ENCODE measurements at regions of chr5 and their contacts with region 1.

Region 1: GRCh38 chr5:179495906-179496455 is 54.4 kb upstream of the RUFY1 start:
- DNase-seq: no peak
- ATAC-seq: no peak
- H3K4me3 Mint-ChIP-seq: no peak overlapping the region
- H3K27ac Mint-ChIP-seq: no peak overlapping the region
- H3K4me1 Mint-ChIP-seq: no peaks in the 10 kb centered on the region
- H3K27me3 Mint-ChIP-seq: peaks cover 4% of the 10 kb centered on the region

Region 2: GRCh38 chr5:178279725-178280438 is 1216.1 kb before region 1 on chr5:
- CTCF ChIA-PET with region 1: interaction called, 4 read pairs
- POLR2A ChIA-PET with region 1: no interaction called
- intact Hi-C with region 1: loop called in 1 of 2 experiments (anchors 5 kb)
- DNase-seq: peak; percentile 82
- ATAC-seq: peak; percentile 53
- H3K4me3 Mint-ChIP-seq: no peak overlapping the region
- H3K27ac Mint-ChIP-seq: no peak overlapping the region
- H3K4me1 Mint-ChIP-seq: peaks cover 3% of the 10 kb centered on the region
- H3K27me3 Mint-ChIP-seq: peaks cover 8% of the 10 kb centered on the region

Region 3: GRCh38 chr5:178793151-178793550 is 702.8 kb before region 1 on chr5:
- CTCF ChIA-PET with region 1: no interaction called
- POLR2A ChIA-PET with region 1: no interaction called
- intact Hi-C with region 1: loop called in 1 of 2 experiments (anchors 1 kb)
- DNase-seq: peak; percentile 62
- ATAC-seq: no peak
- H3K4me3 Mint-ChIP-seq: no peak overlapping the region
- H3K27ac Mint-ChIP-seq: no peak overlapping the region
- H3K4me1 Mint-ChIP-seq: no peaks in the 10 kb centered on the region
- H3K27me3 Mint-ChIP-seq: peaks cover 4% of the 10 kb centered on the region

Region 4: GRCh38 chr5:178958774-178959173 is 537.2 kb before region 1 on chr5:
- CTCF ChIA-PET with region 1: no interaction called
- POLR2A ChIA-PET with region 1: no interaction called
- intact Hi-C with region 1: loop called in 1 of 2 experiments (anchors 5 kb)
- DNase-seq: no peak
- ATAC-seq: no peak
- H3K4me3 Mint-ChIP-seq: no peak overlapping the region
- H3K27ac Mint-ChIP-seq: no peak overlapping the region
- H3K4me1 Mint-ChIP-seq: no peaks in the 10 kb centered on the region
- H3K27me3 Mint-ChIP-seq: peaks cover 3% of the 10 kb centered on the region

Region 5: GRCh38 chr5:179166886-179167841 is 328.8 kb before region 1 on chr5:
- CTCF ChIA-PET with region 1: interaction called, 17 read pairs
- POLR2A ChIA-PET with region 1: no interaction called
- intact Hi-C with region 1: loop called (anchors 1 kb)
- DNase-seq: peak; percentile 85
- ATAC-seq: peak; percentile 95
- H3K4me3 Mint-ChIP-seq: no peak overlapping the region
- H3K27ac Mint-ChIP-seq: no peak overlapping the region
- H3K4me1 Mint-ChIP-seq: no peaks in the 10 kb centered on the region
- H3K27me3 Mint-ChIP-seq: peaks cover 4% of the 10 kb centered on the region

Region 6: DNA sequence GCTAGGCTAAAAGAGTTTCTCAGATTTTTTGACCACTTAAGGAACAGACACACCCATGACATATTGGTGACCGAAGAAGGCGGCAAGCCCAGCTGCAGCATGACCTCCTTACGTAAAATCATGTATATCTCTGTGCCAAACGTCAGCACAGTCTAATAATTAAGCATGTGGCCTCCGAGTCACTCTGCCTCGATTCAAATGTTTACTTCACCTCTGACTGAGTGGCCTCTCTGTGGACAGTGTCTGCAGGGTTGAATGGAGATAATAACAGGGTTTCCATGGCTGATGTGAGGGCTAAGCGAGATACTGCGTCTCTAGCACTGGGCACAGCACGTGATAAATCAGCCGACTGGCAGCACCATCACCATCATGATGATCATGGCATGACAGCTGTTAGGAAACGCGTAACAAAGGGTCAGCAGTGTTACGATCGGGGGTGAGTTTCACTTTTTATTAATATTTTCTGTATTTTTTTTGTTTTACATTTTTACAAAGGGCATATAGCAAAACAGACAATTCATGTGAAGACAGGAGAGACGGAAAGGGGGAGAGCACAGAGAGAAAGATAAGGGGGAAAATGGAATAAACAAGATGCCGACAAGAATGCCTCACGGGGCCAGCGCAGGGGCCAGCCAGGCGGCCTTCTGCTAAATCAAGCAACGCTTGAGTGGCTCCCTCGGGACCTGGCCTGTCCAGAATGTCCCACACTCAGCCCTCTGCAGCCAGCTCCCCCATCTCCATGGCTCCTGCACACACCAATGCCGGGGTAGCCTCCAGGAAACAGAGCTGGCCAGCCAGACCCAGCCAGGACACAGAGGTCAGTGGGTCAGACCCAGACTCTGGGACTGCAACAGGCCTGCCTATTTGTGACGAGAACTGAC is 211.0 kb before region 1 on chr5:
- CTCF ChIA-PET with region 1: no interaction called
- POLR2A ChIA-PET with region 1: no interaction called
- intact Hi-C with region 1: loop called in 1 of 2 experiments (anchors 10 kb)
- DNase-seq: no peak
- ATAC-seq: no peak
- H3K4me3 Mint-ChIP-seq: no peak overlapping the region
- H3K27ac Mint-ChIP-seq: no peak overlapping the region
- H3K4me1 Mint-ChIP-seq: no peaks in the 10 kb centered on the region
- H3K27me3 Mint-ChIP-seq: no peaks in the 10 kb centered on the region

Region 7: DNA sequence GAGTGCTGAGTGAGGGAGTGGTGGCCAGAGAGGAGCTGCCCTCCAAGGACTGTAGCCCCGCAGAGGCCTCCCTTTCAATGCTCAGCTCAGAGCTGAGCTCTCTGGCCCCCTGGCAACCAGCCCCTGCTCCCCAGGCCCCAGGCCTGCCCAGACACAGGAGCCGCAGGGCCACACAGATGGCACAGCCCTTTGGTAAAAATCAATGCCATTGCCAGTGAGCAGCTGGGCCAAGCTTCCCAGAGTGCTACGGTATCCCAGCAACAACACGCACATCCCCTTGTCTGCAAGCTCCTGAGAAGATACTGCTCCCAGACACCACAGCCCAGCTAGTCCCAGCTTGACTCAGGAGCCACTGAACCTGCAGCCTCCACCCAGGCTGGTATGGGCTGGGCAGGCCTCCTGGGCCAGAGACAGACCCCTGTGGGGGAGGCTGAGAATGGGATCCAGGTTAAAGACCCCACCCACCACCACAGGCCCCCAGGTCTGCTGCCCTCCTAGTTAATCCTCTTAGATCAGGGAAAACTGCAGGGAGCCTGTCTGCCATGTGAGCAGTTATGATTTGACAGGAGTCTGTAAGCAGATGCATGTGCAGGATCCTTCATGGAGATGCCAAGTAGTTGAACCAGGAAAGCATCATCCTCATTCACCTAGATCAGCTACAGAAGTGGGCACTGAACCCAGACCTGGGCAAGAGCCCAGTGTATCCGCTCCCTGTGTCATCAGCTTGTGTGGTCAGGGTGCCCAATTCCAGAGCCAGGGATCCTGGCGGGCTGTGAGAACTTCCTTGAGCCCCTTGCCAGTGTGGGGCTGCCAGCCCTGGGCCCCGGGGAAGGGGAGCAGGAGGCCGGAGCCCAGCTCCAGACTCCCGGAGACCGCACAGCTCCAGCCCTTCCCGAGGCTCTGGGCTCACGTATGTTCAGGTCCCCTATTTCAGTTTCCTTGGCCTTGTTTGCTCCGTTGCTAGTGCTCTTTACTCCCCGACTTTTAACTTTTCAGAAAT is 124.0 kb before region 1 on chr5:
- CTCF ChIA-PET with region 1: no interaction called
- POLR2A ChIA-PET with region 1: no interaction called
- intact Hi-C with region 1: no loop called
- DNase-seq: no peak
- ATAC-seq: no peak
- H3K4me3 Mint-ChIP-seq: no peak overlapping the region
- H3K27ac Mint-ChIP-seq: no peak overlapping the region
- H3K4me1 Mint-ChIP-seq: no peaks in the 10 kb centered on the region
- H3K27me3 Mint-ChIP-seq: no peaks in the 10 kb centered on the region

Region 8: GRCh38 chr5:179509239-179509638 is 13.3 kb after region 1 on chr5:
- CTCF ChIA-PET with region 1: no interaction called
- POLR2A ChIA-PET with region 1: no interaction called
- intact Hi-C with region 1: no loop called
- DNase-seq: no peak
- ATAC-seq: no peak
- H3K4me3 Mint-ChIP-seq: no peak overlapping the region
- H3K27ac Mint-ChIP-seq: no peak overlapping the region
- H3K4me1 Mint-ChIP-seq: peaks cover 2% of the 10 kb centered on the region
- H3K27me3 Mint-ChIP-seq: no peaks in the 10 kb centered on the region